Mammary epithelial cell (primary cell): ENCODE measurements at regions of chr5 and their contacts with region 1.

Region 1: DNA sequence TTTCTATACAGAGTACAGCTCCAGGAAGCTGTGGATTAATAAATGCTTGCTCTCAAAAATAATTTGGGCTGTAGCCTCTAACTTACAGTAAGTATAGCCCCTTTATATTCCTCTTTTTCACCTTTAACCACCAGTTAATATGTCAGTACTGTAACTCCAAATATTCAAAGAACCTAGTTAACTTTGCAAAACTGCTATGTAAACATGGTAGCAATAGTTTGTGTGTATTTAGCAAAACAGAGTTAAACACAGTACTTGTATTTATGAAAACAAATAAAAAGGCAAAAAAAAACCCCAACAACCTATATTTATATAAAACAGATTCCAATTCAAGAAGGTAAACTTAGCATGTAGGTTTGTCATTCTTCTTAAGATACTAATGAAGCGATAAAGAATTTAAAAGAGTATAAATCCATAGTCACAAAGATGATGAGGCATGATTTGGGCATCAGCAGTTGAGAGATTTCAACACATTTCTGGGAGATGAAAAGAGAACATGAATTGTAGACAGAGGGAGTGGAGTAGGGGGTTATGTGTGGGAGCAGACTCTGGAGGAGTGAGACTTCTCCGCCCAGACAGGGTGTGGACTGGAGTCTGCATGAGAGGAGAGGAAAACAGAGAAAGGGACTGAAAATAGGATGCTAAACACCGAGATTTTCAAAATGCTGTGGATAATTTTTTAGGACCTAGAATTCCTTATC is 47.0 kb upstream of the F2RL1 start:
- DNase-seq: no peak
- H3K4me3 ChIP-seq: no peak overlapping the region
- H3K27ac ChIP-seq: no peak overlapping the region
- H3K4me1 ChIP-seq: no peaks in the 10 kb centered on the region
- H3K27me3 ChIP-seq: no peaks in the 10 kb centered on the region
- CTCF ChIP-seq: no peak

Region 2: DNA sequence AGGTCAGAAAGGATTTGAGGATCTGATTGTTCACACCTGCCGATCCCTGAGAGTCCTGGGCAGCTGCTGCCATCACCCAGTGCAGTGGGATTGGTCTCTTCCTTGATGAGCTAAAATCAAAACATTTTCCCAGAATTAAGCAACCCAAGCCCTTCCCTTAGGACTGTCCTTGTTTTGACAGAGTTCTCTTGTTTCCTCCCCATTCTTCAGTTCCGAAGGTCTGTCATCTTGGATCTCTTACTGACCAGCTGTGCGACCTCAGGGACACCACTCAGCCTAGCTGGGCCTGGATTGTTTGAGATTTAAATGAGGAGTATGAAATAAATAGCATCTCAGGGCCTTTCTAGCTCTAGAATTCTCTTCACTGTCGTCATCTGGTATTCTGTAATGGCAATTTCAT is 459.1 kb before region 1 on chr5:
- CTCF ChIA-PET with region 1: no interaction called
- dilution Hi-C with region 1: no loop called
- in situ Hi-C with region 1: no loop called
- intact Hi-C with region 1: no loop called
- DNase-seq: no peak
- H3K4me3 ChIP-seq: no peak overlapping the region
- H3K27ac ChIP-seq: no peak overlapping the region
- H3K4me1 ChIP-seq: no peaks in the 10 kb centered on the region
- H3K27me3 ChIP-seq: peaks cover 2% of the 10 kb centered on the region
- CTCF ChIP-seq: no peak

Region 3: DNA sequence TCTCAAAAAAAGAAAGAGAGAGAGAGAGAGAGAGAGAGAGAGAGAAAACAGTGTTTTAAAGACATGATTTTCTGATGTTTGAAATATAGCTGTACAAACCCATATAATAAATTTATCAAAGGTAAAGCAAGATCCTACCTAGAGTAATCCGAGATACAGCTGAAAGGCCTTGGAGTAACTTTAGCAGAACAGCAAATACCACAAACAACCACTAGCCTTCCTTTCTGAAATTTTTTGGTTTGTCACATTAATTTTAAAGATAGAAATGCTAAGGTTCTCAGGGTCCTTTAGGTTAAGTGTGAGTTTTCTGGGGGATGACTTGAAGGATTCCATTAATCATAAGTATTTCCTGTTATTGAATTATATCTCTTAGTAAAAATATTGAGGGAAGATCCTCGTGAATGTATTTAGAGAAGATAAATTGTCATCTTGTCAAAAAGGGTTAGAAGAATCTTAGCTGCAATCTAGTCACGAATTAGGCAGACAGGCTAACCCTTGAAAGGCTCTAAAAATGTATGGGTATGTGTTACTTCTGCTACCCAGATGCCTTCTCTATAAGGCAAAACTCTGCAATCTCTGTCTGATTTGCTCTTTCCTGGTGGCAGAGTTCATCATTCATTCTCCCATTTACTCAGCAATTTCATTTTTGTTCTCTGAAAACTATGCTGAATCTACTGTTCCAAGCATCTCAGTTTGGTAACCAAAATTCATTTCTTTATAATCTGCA is 175.9 kb before region 1 on chr5:
- CTCF ChIA-PET with region 1: interaction called, 32 read pairs
- dilution Hi-C with region 1: no loop called
- in situ Hi-C with region 1: loop called (anchors 5 kb)
- intact Hi-C with region 1: loop called (anchors 1 kb)
- DNase-seq: no peak
- H3K4me3 ChIP-seq: no peak overlapping the region
- H3K27ac ChIP-seq: no peak overlapping the region
- H3K4me1 ChIP-seq: no peaks in the 10 kb centered on the region
- H3K27me3 ChIP-seq: no peaks in the 10 kb centered on the region
- CTCF ChIP-seq: no peak

Region 4: GRCh38 chr5:76641514-76642120 is 130.2 kb before region 1 on chr5:
- CTCF ChIA-PET with region 1: interaction called, 4 read pairs
- dilution Hi-C with region 1: no loop called
- in situ Hi-C with region 1: no loop called
- intact Hi-C with region 1: loop called (anchors 1 kb)
- DNase-seq: peak; percentile 41
- H3K4me3 ChIP-seq: no peak overlapping the region
- H3K27ac ChIP-seq: no peak overlapping the region
- H3K4me1 ChIP-seq: peaks cover 7% of the 10 kb centered on the region
- H3K27me3 ChIP-seq: no peaks in the 10 kb centered on the region
- CTCF ChIP-seq: peak; percentile 83 to 86

Region 5: DNA sequence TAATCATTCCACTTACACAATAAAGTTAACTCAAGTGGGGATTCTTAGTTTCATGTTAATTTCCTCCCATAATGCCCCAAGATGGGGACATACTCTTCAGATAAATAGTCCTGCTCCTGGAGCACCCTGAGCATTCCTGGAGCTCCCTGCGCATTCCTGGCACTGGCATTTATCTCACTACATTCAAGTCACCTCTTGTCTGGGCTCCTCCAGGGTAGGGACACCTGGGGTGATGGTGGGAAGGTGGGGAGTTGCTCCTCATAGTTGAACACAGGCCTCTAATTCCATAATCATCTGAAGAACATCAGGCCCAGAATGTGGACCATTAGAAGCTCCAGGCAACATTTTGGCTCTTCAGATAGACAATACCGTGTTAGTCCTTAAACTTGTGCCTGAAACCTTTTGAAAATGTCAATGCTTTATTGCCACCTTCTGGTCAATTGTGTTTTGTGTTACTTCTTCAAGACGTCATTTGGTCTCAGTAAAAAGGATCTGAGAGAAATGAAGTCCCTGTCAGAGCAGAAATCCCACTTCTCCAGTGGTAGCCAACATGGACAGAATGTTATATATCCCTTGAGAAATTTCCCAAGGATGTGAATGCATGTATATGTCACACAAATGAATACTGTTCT is 244.2 kb after region 1 on chr5:
- CTCF ChIA-PET with region 1: interaction called, 4 read pairs
- dilution Hi-C with region 1: no loop called
- in situ Hi-C with region 1: no loop called
- intact Hi-C with region 1: loop called (anchors 5 kb)
- DNase-seq: peak; percentile 37
- H3K4me3 ChIP-seq: no peak overlapping the region
- H3K27ac ChIP-seq: no peak overlapping the region
- H3K4me1 ChIP-seq: no peaks in the 10 kb centered on the region
- H3K27me3 ChIP-seq: no peaks in the 10 kb centered on the region
- CTCF ChIP-seq: peak in 1 of 2 donors; percentile 44